ENCODE measurements at regions of chr5 and their contacts with region 1.

Region 1: GRCh38 chr5:32585446-32586275 is at the start of gene SUB1:
- DNase-seq: peak; percentile 73 to 96
- H3K4me3 ChIP-seq: peak within 1 kb of the TSS; percentile 94 to 96
- H3K27ac ChIP-seq: peak within 1 kb of the TSS; percentile 99
- H3K4me1 ChIP-seq: peaks cover 6 to 18% of the 10 kb centered on the region in 2 donors
- H3K27me3 ChIP-seq: no peaks in the 10 kb centered on the region
- CTCF ChIP-seq: peak in 1 of 3 experiments; percentile 13
- total RNA-seq, gene SUB1: 103 TPM

Region 2: DNA sequence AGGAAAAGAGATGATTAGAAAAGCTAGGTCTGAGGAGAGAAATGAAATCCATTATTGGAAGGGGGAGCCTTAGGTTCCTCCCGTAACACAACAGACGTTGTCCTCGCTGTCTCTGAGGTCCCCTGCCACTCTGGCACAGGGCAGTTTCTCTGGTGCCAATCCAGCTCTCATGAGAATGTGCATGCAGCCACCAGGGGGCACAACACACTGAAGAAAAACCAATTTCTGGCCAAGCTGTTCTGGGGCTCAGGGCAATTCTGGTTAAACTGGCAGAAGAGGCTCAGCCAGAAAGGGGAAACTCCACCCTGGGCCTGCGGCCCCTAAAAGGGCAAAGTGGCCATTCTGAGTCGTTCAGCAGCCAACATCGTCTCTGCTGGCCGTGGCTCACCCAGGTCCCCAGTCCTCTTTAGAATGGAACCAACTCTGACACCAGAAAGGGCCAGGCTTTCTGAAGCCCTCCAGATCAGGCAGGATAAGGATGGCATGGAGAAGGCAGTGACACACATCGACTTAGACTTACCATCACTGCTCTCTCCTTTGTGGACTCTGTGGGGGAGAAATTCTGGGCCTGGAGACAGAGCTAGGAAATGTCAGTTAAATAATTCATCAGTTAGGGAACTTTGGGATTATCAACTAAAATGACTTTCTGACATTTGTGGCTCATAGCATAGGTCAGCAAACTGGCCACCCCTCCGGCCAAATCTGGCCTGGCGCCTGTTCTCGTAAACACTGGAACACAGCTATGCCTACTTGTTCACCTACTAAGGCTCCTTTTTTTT is 353.0 kb before region 1 on chr5:
- intact Hi-C with region 1: loop called (anchors 5 kb)
- DNase-seq: peak; percentile 37 to 86
- H3K4me3 ChIP-seq: no peak overlapping the region
- H3K27ac ChIP-seq: peak overlapping the region; percentile 58 to 65
- H3K4me1 ChIP-seq: peaks cover 0 to 22% of the 10 kb centered on the region in 2 donors
- H3K27me3 ChIP-seq: no peaks in the 10 kb centered on the region
- CTCF ChIP-seq: peak; percentile 73 to 80 (median 78)

Region 3: DNA sequence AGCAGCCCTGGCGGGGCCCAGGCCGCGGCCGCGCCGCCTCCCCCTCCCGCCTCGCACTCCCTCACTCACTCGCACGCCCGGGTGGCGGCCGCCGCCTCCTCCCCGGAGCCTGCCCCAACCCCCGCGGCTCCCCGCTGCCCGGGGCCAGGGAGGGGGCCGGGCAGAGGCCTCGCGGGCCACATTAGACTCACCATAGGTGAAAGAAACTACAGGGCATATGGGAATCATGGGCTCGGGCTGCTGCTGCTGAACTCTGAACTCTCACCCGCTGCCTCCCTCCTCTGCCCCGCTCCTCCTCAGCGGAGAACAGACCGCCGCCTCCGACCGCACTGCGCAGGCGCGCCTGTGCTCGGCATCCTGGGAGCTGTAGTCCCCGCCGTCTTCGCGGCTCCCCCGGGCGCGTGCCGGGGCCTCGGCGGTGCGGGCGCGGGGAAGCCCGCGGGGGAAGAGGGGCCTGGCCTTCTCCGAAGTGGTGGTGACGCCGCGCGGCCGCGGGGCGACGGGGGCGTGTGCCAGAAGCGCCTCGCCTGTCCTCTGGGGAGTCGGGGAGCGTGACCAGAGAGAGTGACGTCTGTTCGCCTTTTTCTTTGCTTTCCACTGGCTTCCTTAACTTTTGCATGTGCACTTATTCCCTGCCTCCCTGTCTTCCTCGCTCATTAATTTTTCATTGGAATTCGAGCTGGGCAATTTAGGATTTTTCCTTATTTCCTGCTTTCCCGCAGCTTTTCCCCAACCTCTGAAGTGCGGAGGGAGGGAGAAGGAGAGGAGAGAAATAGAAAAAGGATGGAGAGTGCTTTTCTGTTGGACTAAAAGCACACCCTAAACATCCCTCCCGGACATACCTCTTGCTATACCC is 141.0 kb before region 1 on chr5 and contains the start of gene ZFR:
- intact Hi-C with region 1: loop called (anchors 2 kb)
- DNase-seq: peak; percentile 61 to 94
- H3K4me3 ChIP-seq: peak within 1 kb of the TSS; percentile 82 to 92
- H3K27ac ChIP-seq: peak within 1 kb of the TSS; percentile 96 to 97
- H3K4me1 ChIP-seq: peaks cover 3 to 21% of the 10 kb centered on the region in 2 donors
- H3K27me3 ChIP-seq: no peaks in the 10 kb centered on the region
- CTCF ChIP-seq: no peak
- total RNA-seq, gene ZFR: 25.8 TPM

Region 4: GRCh38 chr5:32504989-32505596 is 80.6 kb before region 1 on chr5:
- intact Hi-C with region 1: loop called (anchors 5 kb)
- DNase-seq: peak in 1 of 2 donors; percentile 75
- H3K4me3 ChIP-seq: peak overlapping the region in 1 of 2 donors; percentile 33
- H3K27ac ChIP-seq: peak overlapping the region; percentile 52 to 80
- H3K4me1 ChIP-seq: peaks cover 3 to 25% of the 10 kb centered on the region in 2 donors
- H3K27me3 ChIP-seq: no peaks in the 10 kb centered on the region
- CTCF ChIP-seq: no peak

Region 5: DNA sequence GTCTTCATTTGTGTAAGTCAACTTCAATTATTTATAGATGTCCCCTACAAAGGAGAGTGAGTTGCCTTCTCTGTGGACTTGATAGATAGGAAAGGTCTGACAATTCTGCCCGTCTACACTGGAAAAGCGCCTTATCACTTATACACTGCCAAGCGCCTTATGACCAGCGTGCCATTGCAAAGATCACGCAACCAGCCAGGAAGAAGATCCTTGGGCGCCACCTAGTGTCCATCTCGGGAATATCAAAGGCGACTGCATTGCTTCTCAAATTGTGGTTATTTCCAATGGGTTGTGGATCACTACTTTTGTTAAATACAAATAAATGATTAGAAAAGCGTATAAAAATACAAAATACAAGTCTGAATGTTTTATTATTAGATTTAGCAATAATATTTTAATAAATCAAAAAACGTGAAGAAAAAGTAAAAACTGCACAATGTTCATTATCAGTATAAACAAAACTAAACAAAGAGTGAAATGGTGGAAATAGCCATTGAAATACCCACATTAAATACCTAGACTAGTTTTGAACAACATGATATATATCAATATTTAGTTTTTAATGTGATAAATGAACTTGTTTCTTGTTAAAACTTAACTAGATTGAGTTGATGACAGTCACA is 27.5 kb after region 1 on chr5:
- intact Hi-C with region 1: loop called (anchors 2 kb)
- DNase-seq: peak; percentile 37 to 92
- H3K4me3 ChIP-seq: no peak overlapping the region
- H3K27ac ChIP-seq: peak overlapping the region; percentile 51 to 59
- H3K4me1 ChIP-seq: peaks cover 3 to 13% of the 10 kb centered on the region in 2 donors
- H3K27me3 ChIP-seq: no peaks in the 10 kb centered on the region
- CTCF ChIP-seq: peak; percentile 71 to 91 (median 85)

Region 6: DNA sequence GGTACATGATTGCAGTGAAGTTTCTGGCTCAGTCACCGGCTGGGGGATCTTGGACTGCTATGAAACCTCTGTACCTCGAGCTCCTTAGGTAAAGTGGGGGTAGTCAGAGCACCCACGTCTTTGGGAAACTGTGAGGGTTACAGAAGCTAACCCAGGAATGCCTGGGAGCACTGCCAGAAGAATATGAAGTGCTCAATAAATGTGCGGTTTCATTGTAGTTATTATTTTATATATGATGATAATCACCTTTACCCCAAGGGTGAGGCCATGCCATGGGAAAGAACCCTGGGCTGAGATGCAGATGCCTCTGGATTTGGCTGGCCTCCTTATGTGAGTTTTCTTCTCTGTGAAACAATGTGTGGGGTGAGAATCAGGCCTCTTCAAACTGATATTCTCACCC is 129.2 kb after region 1 on chr5:
- intact Hi-C with region 1: no loop called
- DNase-seq: no peak
- H3K4me3 ChIP-seq: peak overlapping the region; percentile 71 to 85
- H3K27ac ChIP-seq: peak overlapping the region; percentile 94 to 97
- H3K4me1 ChIP-seq: peaks cover 0 to 4% of the 10 kb centered on the region in 2 donors
- H3K27me3 ChIP-seq: no peaks in the 10 kb centered on the region
- CTCF ChIP-seq: no peak

Measured in ascending aorta (tissue), 2 donors.